ENCODE measurements at regions of chr1 and their contacts with region 1.

Region 1: GRCh38 chr1:172532700-172533509 is at the start of gene SUCO:
- DNase-seq: peak; percentile 97 to 100 (median 99)
- ATAC-seq: peak; percentile 90
- H3K4me3 ChIP-seq: peak within 1 kb of the TSS; percentile 98
- H3K4me3 Mint-ChIP-seq: peak within 1 kb of the TSS; percentile 90 to 100 (median 98)
- H3K27ac ChIP-seq: peak within 1 kb of the TSS; percentile 99
- H3K27ac Mint-ChIP-seq: peak within 1 kb of the TSS; percentile 99 to 100 (median 100)
- H3K4me1 ChIP-seq: peaks cover 30 to 34% of the 10 kb centered on the region in 2 donors
- H3K4me1 Mint-ChIP-seq: peaks cover 32 to 60% (median 49%) of the 10 kb centered on the region in 7 donors
- H3K27me3 ChIP-seq: no peaks in the 10 kb centered on the region
- H3K27me3 Mint-ChIP-seq: peaks cover 0 to 16% (median 4%) of the 10 kb centered on the region in 5 donors
- total RNA-seq, gene SUCO: 52.0 to 95.0 (median 77.0) TPM

Region 2: DNA sequence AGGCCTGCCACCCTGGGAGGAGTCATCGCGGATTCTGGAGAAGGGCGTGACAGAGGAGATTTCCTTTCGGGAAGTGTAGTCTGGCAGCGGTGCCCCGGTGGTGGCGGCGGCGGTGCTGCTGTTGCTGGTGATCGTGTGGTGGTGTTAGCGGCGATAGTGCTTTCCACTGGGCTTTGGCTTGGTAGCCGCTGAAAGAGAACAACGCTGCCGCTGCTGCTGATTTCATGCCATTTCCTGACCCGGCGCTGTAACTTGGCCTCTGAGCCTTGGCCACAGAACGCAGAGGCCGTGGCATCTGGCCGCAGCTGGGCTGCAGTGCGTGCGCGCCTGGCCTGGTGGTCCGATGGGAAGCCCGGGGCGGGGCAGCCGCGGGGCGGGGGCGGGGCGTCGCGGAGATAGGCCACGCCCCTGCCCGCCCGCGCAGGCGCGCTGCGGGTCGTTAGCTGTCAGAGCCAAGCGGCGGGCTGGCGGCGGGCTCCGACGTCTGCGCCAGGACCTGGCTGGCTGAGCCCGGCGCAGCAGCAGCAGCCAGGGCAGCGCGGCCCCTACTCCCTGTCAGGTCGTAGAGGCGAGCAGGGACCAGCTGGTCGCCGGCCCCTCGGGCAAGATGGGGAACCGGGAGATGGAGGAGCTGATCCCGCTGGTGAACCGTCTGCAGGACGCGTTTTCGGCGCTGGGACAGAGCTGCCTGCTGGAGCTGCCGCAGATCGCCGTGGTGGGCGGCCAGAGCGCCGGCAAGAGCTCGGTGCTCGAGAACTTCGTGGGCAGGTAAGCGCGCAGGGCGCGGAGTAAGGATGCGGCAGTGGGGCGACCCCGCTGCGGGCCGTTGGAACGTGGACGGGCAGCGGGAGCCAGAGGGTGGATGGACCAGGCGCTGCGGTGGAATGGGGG is 691.6 kb before region 1 on chr1 and contains the start of gene DNM3:
- CTCF ChIA-PET with region 1: no interaction called
- POLR2A ChIA-PET with region 1: interaction called, 3 read pairs
- intact Hi-C with region 1: loop called in 1 of 2 experiments (anchors 5 kb)
- DNase-seq: peak; percentile 71 to 90 (median 86)
- ATAC-seq: peak; percentile 97
- H3K4me3 ChIP-seq: peak within 1 kb of the TSS; percentile 80
- H3K4me3 Mint-ChIP-seq: peak within 1 kb of the TSS; percentile 85 to 93 (median 90)
- H3K27ac ChIP-seq: peak within 1 kb of the TSS; percentile 64
- H3K27ac Mint-ChIP-seq: peak within 1 kb of the TSS; percentile 76 to 95 (median 83)
- H3K4me1 ChIP-seq: peaks cover 0 to 6% of the 10 kb centered on the region in 2 donors
- H3K4me1 Mint-ChIP-seq: peaks cover 15 to 19% (median 18%) of the 10 kb centered on the region in 7 donors
- H3K27me3 ChIP-seq: peaks cover 3 to 16% of the 10 kb centered on the region in 2 donors
- H3K27me3 Mint-ChIP-seq: peaks cover 12 to 44% (median 16%) of the 10 kb centered on the region in 5 donors
- total RNA-seq, gene DNM3: 1.9 to 2.5 (median 2.1) TPM

Region 3: DNA sequence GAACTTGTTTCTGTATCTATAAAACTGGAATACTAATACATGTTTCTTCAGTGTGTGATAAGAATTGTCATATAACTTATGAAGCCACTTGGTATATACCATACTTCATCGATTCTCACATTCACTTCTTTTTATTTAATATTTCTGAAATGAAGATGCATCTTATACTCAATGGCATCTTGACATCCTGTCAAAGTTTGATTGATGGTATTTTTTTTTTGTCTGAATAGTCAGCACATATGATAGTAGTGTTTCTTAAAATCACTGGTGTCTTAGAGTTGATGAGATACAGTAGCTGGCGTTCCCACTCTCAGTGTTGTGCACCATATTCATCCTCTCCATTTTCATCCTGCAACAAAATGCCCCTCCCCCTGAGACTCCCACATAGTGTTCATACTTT is 146.9 kb before region 1 on chr1:
- CTCF ChIA-PET with region 1: no interaction called
- POLR2A ChIA-PET with region 1: no interaction called
- intact Hi-C with region 1: no loop called
- DNase-seq: no peak
- ATAC-seq: no peak
- H3K4me3 ChIP-seq: no peak overlapping the region
- H3K4me3 Mint-ChIP-seq: no peak overlapping the region
- H3K27ac ChIP-seq: no peak overlapping the region
- H3K27ac Mint-ChIP-seq: no peak overlapping the region
- H3K4me1 ChIP-seq: peaks cover 0 to 8% of the 10 kb centered on the region in 2 donors
- H3K4me1 Mint-ChIP-seq: peaks cover 6 to 31% (median 27%) of the 10 kb centered on the region in 7 donors
- H3K27me3 ChIP-seq: no peaks in the 10 kb centered on the region
- H3K27me3 Mint-ChIP-seq: peaks cover 0 to 6% (median 0%) of the 10 kb centered on the region in 5 donors

Region 4: DNA sequence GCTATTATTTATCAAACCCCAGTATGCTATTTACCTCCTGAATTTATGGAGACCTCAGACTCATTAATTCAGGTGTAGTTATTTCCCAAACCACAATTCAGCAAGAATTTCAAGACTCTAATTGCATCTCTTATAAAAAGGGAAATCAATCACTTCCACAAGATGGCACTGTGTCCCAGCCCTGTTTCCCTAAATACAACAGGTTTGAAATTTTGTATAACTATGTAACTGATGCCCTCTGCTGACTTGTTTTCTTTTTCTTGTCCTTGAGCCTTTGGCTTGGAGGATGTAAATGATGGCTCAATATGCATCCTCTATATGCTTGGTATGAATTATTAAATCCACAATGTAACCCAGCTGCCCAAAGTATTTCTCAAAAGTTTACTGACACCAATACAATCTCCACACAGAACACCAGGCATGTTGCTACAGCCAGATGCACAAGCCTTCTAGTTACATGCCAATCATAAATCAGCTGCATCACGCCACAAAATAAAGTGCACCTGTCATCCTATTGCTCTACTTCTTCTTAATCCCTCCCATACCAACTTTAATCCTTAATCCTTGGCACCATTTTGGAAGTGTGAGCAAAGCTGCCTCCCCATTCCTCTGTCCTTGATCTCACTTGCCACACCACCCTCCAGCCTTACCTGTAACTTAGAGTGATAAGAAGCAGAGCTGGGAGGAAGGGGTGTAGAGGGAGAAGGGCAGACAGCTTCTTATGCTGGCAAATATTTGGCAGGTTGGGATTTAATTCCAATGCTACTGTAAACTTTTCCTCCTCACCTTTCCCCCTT is 103.4 kb before region 1 on chr1:
- CTCF ChIA-PET with region 1: interaction called, 4 read pairs
- POLR2A ChIA-PET with region 1: interaction called, 15 read pairs
- intact Hi-C with region 1: loop called in 1 of 2 experiments (anchors 1 kb)
- DNase-seq: peak in 7 of 9 donors; percentile 47 to 73 (median 65)
- ATAC-seq: peak; percentile 92
- H3K4me3 ChIP-seq: no peak overlapping the region
- H3K4me3 Mint-ChIP-seq: peak overlapping the region in 5 of 10 donors; percentile 16 to 57 (median 49)
- H3K27ac ChIP-seq: no peak overlapping the region
- H3K27ac Mint-ChIP-seq: peak overlapping the region in 5 of 9 donors; percentile 76 to 92 (median 84)
- H3K4me1 ChIP-seq: peaks cover 13 to 64% of the 10 kb centered on the region in 2 donors
- H3K4me1 Mint-ChIP-seq: peaks cover 0 to 46% (median 32%) of the 10 kb centered on the region in 7 donors
- H3K27me3 ChIP-seq: no peaks in the 10 kb centered on the region
- H3K27me3 Mint-ChIP-seq: no peaks in the 10 kb centered on the region

Region 5: GRCh38 chr1:172638885-172639831 is 106.3 kb after region 1 on chr1:
- CTCF ChIA-PET with region 1: no interaction called
- POLR2A ChIA-PET with region 1: interaction called, 5 read pairs
- intact Hi-C with region 1: loop called (anchors 1 kb)
- DNase-seq: peak; percentile 12 to 85 (median 79)
- ATAC-seq: peak; percentile 87
- H3K4me3 ChIP-seq: peak overlapping the region; percentile 32
- H3K4me3 Mint-ChIP-seq: peak overlapping the region; percentile 46 to 88 (median 78)
- H3K27ac ChIP-seq: peak overlapping the region; percentile 43
- H3K27ac Mint-ChIP-seq: peak overlapping the region; percentile 88 to 94 (median 91)
- H3K4me1 ChIP-seq: peaks cover 63 to 72% of the 10 kb centered on the region in 2 donors
- H3K4me1 Mint-ChIP-seq: peaks cover 54 to 87% (median 81%) of the 10 kb centered on the region in 7 donors
- H3K27me3 ChIP-seq: no peaks in the 10 kb centered on the region
- H3K27me3 Mint-ChIP-seq: peaks cover 0 to 29% (median 0%) of the 10 kb centered on the region in 5 donors

Region 6: GRCh38 chr1:172738389-172738788 is 205.5 kb after region 1 on chr1:
- CTCF ChIA-PET with region 1: no interaction called
- POLR2A ChIA-PET with region 1: no interaction called
- intact Hi-C with region 1: no loop called
- DNase-seq: no peak
- ATAC-seq: no peak
- H3K4me3 ChIP-seq: no peak overlapping the region
- H3K4me3 Mint-ChIP-seq: no peak overlapping the region
- H3K27ac ChIP-seq: no peak overlapping the region
- H3K27ac Mint-ChIP-seq: no peak overlapping the region
- H3K4me1 ChIP-seq: no peaks in the 10 kb centered on the region
- H3K4me1 Mint-ChIP-seq: peaks cover 0 to 8% (median 5%) of the 10 kb centered on the region in 7 donors
- H3K27me3 ChIP-seq: no peaks in the 10 kb centered on the region
- H3K27me3 Mint-ChIP-seq: peaks cover 0 to 72% (median 0%) of the 10 kb centered on the region in 5 donors

Region 7: DNA sequence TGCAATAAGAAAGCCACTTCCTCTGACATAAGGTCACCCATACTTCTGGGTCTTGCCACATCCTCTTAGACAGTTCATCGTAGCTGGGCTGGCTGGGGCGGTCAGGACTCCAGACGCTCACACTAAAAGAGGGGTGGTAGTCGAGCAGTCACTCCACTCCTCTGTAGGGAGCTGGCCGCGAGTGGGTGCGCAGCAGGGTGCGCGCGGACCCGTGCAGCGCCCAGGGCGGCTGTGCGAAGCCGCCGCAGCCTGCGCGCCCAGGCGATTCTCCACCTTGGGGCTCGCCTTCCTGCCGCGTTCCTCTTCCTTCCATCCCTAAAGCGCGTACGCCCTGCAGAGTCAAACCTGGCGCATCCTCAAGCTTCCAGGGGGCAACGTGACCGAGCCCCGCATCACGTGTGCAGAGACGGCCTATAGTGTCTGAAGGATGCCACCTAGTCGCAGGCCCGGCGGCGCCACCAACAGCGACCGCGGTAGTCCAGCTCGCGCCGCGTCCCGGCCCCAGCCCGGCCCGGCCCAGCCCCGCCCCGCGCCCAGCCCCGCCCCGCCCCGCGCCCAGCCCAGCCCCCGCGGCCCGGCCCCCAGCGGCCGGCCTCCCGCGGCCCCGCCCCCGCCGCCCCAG is 943.9 kb after region 1 on chr1:
- CTCF ChIA-PET with region 1: no interaction called
- POLR2A ChIA-PET with region 1: no interaction called
- intact Hi-C with region 1: loop called (anchors 1 kb)
- DNase-seq: peak; percentile 65 to 82 (median 78)
- ATAC-seq: peak; percentile 87
- H3K4me3 ChIP-seq: peak overlapping the region; percentile 92
- H3K4me3 Mint-ChIP-seq: peak overlapping the region; percentile 82 to 94 (median 91)
- H3K27ac ChIP-seq: peak overlapping the region; percentile 78
- H3K27ac Mint-ChIP-seq: peak overlapping the region; percentile 61 to 96 (median 89)
- H3K4me1 ChIP-seq: peaks cover 20 to 31% of the 10 kb centered on the region in 2 donors
- H3K4me1 Mint-ChIP-seq: peaks cover 38 to 72% (median 63%) of the 10 kb centered on the region in 7 donors
- H3K27me3 ChIP-seq: no peaks in the 10 kb centered on the region
- H3K27me3 Mint-ChIP-seq: no peaks in the 10 kb centered on the region

Region 8: GRCh38 chr1:174159252-174160108 is 1626.6 kb after region 1 on chr1 and contains the start of gene RABGAP1L:
- CTCF ChIA-PET with region 1: no interaction called
- POLR2A ChIA-PET with region 1: no interaction called
- intact Hi-C with region 1: loop called in 1 of 2 experiments (anchors 1 kb)
- DNase-seq: peak; percentile 87 to 95 (median 93)
- ATAC-seq: peak; percentile 96
- H3K4me3 ChIP-seq: peak within 1 kb of the TSS; percentile 72
- H3K4me3 Mint-ChIP-seq: peak within 1 kb of the TSS; percentile 92 to 100 (median 96)
- H3K27ac ChIP-seq: peak within 1 kb of the TSS; percentile 87
- H3K27ac Mint-ChIP-seq: peak within 1 kb of the TSS; percentile 86 to 98 (median 98)
- H3K4me1 ChIP-seq: peaks cover 9 to 20% of the 10 kb centered on the region in 2 donors
- H3K4me1 Mint-ChIP-seq: peaks cover 31 to 59% (median 53%) of the 10 kb centered on the region in 7 donors
- H3K27me3 ChIP-seq: no peaks in the 10 kb centered on the region
- H3K27me3 Mint-ChIP-seq: no peaks in the 10 kb centered on the region
- total RNA-seq, gene RABGAP1L: 51.9 to 97.4 (median 74.3) TPM

Measured in naive thymus-derived CD4-positive, alpha-beta T cell (primary cell).